GM10248 (cell line): ENCODE measurements at regions of chr5 and their contacts with region 1.

Region 1: DNA sequence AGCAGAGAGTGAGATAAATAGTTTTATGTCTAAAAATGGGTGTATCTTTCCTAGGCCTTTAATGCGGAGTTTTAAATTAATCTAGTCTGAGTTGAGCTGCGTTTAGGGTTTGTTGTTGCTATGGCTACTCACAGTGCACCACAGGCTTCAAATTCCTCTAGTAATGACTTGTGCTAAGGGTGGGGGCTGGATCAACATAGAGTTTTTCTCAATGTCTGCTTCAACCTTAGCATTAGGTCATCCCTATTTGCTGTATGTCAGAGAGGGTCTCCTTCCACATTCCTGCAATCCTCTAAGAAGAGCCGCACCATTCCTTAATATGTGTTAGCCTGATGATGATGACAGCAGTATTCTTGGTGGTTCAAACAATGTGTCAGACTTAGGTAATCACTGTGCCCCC is 465.6 kb upstream of the KIF2A start:
- DNase-seq: no peak
- CTCF ChIP-seq: no peak

Region 2: GRCh38 chr5:60712950-60713349 is 1127.4 kb before region 1 on chr5:
- CTCF ChIA-PET with region 1: no interaction called
- POLR2A ChIA-PET with region 1: interaction called, 12 read pairs
- DNase-seq: no peak
- CTCF ChIP-seq: no peak

Region 3: DNA sequence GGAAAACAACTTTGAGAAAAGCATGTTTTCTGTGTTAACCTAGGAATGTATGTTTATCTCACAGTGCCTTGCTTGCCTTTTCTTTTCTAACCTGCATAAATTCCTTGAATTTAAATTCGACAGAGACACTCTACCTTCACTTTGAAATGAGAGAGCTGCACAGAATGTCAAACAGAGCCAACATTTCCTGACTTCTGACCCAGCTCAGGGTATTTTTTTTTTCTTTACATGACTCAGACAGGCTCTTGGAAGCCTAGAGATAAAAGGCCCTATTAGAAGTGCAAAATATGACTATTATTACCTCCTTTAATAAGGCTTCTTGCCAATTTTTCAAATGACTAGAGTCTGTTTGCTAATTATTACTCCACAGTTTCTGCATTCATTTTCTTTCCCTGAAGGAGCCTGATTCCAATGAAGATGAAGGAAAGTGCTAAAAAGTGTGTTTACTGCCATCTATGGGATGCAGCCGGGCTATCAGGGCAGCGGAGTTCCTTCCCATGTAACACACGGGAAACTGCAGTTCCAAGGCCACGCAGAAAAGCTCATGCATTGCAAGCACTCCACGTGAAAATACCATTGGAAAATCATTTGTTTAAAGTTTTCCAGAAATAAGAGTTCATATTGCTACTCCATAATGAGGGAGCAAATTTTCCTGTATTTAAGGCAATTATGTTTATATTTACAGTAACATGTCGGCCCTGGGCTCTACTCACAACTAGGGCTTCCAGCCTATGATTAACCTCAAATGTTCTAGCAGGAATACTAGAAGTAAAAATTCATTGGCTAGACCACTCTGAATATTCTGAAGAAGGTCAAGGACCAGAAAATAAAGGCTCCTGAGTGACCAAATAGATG is 22.7 kb before region 1 on chr5:
- CTCF ChIA-PET with region 1: no interaction called
- POLR2A ChIA-PET with region 1: no interaction called
- DNase-seq: no peak
- CTCF ChIP-seq: peak; percentile 9

Region 4: DNA sequence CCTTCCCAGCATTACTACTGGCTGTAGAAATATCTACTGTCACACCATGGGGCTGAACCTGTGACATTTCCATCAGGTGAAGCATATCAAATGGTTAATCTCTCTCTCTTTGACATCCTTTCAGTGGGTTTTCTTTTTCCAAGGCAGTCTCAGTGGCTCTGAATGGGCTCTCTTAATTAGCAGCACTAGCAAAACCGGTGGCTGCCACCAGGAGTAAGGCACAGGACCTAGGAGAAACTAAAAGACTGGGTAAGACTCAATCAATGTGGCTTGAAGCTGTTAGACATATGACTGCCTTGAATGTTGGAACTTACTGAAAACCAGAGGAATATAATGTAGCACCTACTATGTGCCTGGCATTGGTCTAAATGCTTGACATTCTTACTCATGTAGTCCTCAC is 20.6 kb after region 1 on chr5:
- CTCF ChIA-PET with region 1: no interaction called
- POLR2A ChIA-PET with region 1: no interaction called
- DNase-seq: no peak
- CTCF ChIP-seq: no peak